GM23248 (cell line): ENCODE measurements at regions of chr1 and their contacts with region 1.

Region 1: GRCh38 chr1:220281159-220281574 is 8.9 kb upstream of the RAB3GAP2 start:
- DNase-seq: peak; percentile 48
- H3K4me3 ChIP-seq: no peak overlapping the region
- H3K27ac ChIP-seq: no peak overlapping the region
- H3K4me1 ChIP-seq: no peaks in the 10 kb centered on the region
- H3K27me3 ChIP-seq: no peaks in the 10 kb centered on the region; the same call in 1 of the 2 replicates

Region 2: DNA sequence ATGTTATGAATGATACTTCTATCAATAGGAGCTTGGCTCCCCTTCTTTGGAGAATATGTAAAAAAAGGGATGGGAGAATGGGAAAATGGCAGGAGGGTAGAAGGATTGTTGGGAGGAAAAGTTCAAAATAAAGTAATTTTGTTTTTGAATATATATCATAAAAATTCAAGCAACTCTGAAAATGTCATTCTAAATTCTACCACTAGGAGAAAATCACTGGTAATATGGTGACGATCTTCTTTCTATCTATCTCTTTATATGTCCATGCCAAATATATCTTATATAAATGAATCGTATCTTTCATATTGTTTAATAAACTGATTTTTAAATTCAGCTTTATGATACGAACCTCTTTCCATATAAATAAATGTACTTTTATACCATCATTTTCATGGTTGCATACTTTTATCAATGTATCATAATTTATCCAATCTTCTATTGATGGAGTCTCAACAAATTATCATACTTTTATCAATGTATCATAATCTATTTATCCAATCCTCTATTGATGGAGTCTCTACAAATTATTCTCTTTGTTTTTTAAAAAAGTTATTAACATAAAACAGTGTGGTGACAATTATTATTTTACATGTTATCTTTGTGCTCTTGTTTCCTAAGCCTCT is 173.1 kb after region 1 on chr1:
- in situ Hi-C with region 1: no loop called
- DNase-seq: no peak
- H3K4me3 ChIP-seq: no peak overlapping the region
- H3K27ac ChIP-seq: no peak overlapping the region
- H3K4me1 ChIP-seq: no peaks in the 10 kb centered on the region
- H3K27me3 ChIP-seq: peaks cover 10% of the 10 kb centered on the region; the same call in 1 of the 2 replicates

Region 3: DNA sequence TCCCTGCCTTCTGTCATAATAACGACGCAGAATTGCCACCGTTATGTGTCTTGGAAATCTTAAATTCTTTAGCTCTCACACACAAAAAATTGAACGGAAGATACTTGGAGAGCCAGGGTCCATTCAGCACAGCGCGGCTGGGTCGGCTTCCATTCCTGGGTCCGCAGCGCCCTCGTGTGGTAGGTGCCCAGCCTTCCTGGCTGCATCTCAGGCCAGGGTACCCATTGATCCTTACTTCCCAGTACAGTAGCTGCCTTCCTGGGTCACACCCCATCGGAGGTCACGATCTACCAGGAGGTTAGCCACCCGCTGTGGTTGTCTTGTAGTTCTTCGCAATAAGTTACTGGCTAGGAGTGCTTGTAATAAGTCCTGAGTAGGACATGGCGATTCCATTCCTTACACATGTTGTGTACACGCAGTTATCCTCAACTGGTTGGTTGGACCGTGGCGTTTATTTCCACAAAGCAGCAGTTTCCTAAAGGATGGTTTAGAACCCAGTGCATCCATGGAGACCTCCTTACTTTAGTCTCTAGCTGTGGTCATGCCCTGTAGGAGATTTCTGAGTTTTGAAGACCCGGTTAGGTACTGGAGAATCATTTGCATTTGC is 495.7 kb after region 1 on chr1:
- in situ Hi-C with region 1: loop called (anchors 10 kb)
- DNase-seq: peak; percentile 80
- H3K4me3 ChIP-seq: no peak overlapping the region
- H3K27ac ChIP-seq: no peak overlapping the region
- H3K4me1 ChIP-seq: no peaks in the 10 kb centered on the region
- H3K27me3 ChIP-seq: no peaks in the 10 kb centered on the region